ENCODE measurements at regions of chr5 and their contacts with region 1.

Region 1: DNA sequence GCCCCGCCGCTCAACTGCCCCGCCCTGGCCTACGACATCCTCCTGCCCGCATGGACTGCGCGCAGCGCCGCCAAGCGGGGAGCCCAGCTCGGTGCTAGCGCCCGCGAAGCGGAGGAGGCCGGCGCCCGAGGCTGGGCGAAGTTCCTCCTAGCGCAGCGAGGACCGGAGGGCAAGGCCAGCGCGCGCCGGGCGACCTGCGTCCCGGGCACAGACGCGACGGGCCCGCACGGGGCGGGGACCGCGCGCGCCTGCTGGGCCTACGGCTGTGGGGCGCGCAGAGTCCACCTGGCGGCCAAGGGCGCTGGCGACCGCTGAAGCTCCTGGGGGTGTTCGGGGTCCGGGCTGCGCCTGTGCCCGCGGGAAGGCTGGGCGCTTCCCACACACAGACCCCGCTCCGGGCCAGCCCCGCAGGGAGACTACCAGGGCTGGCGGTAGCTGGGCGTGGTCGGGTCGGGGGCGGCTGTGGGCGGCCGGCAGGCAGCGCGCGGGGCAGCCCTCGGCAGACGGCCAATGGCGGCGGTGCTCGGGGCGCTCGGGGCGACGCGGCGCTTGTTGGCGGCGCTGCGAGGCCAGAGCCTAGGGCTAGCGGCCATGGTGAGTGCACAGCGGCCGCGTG is at the start of gene PCBD2:
- DNase-seq: peak; percentile 95
- H3K4me3 ChIP-seq: peak within 1 kb of the TSS; percentile 77 to 86 (median 80)
- H3K27ac ChIP-seq: peak within 1 kb of the TSS; percentile 93 to 100 (median 100)
- H3K4me1 ChIP-seq: peaks cover 0 to 5% (median 2%) of the 10 kb centered on the region in 4 donors
- H3K27me3 ChIP-seq: no peaks in the 10 kb centered on the region
- CTCF ChIP-seq: peak; percentile 85 to 97 (median 90)
- EP300 ChIP-seq: no peak
- POLR2A ChIP-seq: peak; percentile 58
- total RNA-seq, gene PCBD2: 6.4 to 28.9 (median 11.6) TPM

Region 2: DNA sequence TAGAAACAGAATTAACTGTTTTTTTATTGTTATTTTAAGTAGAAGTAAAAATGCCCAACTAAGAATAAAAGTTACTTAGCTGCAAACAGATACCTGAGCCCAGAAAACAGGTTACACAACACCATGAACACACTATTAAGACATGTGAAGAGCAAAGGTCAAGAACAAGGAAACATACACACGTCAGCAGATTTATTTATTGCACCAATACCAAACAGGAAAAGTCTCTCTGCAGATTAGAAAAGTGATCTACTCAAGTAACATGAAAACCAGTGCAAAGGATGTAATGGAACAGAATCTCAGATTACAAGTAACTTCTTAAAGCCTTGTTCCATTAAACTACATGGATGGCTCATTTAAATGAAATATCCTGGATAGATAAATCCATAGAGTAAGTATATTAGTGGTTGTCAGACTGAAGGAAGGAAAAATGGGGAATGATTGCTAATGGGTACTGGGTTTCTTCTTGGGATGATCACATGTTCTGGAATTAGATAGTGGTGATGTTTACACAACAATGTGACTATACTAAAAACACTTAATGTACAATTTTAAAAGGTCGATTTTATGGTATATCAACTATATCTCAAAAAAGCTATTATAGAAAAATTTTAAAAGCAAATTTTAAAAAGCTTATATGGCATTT is 278.2 kb before region 1 on chr5:
- in situ Hi-C with region 1: no loop called
- intact Hi-C with region 1: no loop called
- DNase-seq: no peak
- H3K4me3 ChIP-seq: no peak overlapping the region
- H3K27ac ChIP-seq: peak overlapping the region; percentile 32 to 67 (median 51)
- H3K4me1 ChIP-seq: peaks cover 5 to 36% (median 23%) of the 10 kb centered on the region in 4 donors
- H3K27me3 ChIP-seq: no peaks in the 10 kb centered on the region
- CTCF ChIP-seq: no peak
- EP300 ChIP-seq: no peak
- POLR2A ChIP-seq: no peak

Region 3: GRCh38 chr5:134738133-134738962 is 166.4 kb before region 1 on chr5 and contains the start of gene CAMLG:
- in situ Hi-C with region 1: loop called in 2 of 4 experiments (anchors 10 to 25 kb)
- intact Hi-C with region 1: no loop called
- DNase-seq: peak; percentile 99
- H3K4me3 ChIP-seq: peak within 1 kb of the TSS; percentile 66 to 92 (median 86)
- H3K27ac ChIP-seq: peak within 1 kb of the TSS; percentile 91 to 97 (median 94)
- H3K4me1 ChIP-seq: peaks cover 14 to 25% (median 15%) of the 10 kb centered on the region in 4 donors
- H3K27me3 ChIP-seq: no peaks in the 10 kb centered on the region
- CTCF ChIP-seq: peak; percentile 46 to 91 (median 64)
- EP300 ChIP-seq: no peak
- POLR2A ChIP-seq: peak; percentile 95
- total RNA-seq, gene CAMLG: 12.7 to 31.0 (median 24.2) TPM

Region 4: GRCh38 chr5:134749415-134749814 is 155.3 kb before region 1 on chr5:
- in situ Hi-C with region 1: loop called in 2 of 4 experiments (anchors 10 to 25 kb)
- intact Hi-C with region 1: no loop called
- DNase-seq: no peak
- H3K4me3 ChIP-seq: no peak overlapping the region
- H3K27ac ChIP-seq: no peak overlapping the region
- H3K4me1 ChIP-seq: no peaks in the 10 kb centered on the region
- H3K27me3 ChIP-seq: no peaks in the 10 kb centered on the region
- CTCF ChIP-seq: no peak
- EP300 ChIP-seq: no peak
- POLR2A ChIP-seq: no peak

Region 5: DNA sequence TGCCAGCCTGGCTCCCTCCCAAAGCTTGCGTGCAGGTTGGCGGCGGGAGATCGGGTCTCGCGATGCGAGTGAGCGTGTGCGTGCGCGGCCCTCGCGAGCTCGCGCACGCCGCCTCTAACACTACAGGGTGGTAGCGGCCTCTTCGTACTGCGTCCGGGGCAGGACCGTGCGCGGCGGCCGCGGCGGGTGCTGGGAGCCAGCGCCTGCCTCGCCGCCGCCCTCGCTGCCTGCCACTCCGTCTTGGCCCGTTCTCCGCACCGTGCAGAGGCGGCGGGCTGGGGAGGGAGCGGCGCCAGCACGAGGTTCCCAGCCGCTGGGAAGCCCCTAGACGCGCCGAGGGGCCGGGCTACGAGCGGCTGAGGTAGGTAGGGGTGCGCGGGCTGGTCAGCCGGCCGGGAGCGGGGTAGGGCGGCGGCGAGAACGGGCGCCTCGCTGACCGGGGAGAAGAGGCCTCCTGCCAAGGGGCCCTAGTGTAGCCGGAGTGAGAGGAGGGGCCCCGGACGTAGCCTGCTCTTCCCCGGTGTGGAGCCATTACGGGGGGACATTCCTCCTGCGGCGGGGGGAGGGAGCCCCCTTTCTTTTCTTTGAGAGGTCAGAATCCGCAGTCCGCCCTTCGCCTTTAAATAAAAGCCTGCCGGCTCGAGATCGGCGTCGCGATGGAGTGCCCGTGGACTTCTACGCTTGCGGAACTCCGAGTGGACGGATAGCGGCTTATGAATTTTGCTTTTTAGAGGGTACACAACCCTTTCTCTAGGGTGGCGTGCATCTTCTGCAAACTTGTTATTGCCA is 58.7 kb before region 1 on chr5 and contains the start of gene C5orf24:
- in situ Hi-C with region 1: loop called in 1 of 4 experiments (anchors 10 kb)
- intact Hi-C with region 1: loop called (anchors 5 kb)
- DNase-seq: peak; percentile 96
- H3K4me3 ChIP-seq: peak within 1 kb of the TSS; percentile 74 to 97 (median 82)
- H3K27ac ChIP-seq: peak within 1 kb of the TSS; percentile 97 to 99 (median 98)
- H3K4me1 ChIP-seq: peaks cover 11 to 40% (median 25%) of the 10 kb centered on the region in 4 donors
- H3K27me3 ChIP-seq: no peaks in the 10 kb centered on the region
- CTCF ChIP-seq: no peak
- EP300 ChIP-seq: no peak
- POLR2A ChIP-seq: peak; percentile 93
- total RNA-seq, gene C5orf24: 22.8 to 41.9 (median 34.9) TPM

Region 6: DNA sequence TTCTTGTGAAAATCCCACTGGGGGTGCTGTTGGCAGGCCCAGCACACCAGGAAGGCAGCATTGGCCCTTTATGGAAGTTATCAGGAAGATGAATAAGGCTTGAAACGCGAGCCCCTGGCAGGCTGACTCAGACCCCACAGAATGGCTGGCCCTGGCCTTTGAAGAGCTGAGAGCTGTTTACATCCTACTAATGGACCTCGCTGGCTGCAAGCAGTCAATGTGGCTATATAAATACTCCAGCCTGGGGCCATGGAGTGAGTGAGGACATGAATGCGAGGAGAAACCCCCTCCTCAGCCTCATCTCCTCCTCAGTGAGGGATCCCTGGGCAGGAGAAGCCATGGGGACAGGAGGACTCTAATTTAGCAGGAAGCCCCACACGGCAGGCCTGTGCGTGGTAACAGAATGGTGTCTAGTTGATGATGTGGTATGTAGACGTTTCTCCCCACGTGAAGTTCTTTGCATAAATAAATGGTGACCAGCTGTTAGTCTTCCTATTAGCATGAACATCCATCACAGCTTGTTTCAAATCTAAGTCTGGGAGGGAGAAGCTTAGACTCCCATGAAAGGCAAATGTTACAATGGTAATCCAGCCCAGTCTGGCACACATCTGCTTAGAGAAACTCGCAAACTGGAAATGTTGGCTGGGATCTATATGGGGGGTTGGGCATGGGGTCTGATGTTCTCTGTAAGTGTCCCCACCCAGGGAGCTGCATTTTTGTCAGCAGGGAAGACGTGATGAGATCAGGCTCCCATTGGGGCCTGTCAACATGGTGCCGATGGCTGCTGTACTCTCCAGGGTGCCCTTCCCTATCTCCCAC is 304.4 kb after region 1 on chr5:
- in situ Hi-C with region 1: no loop called
- intact Hi-C with region 1: no loop called
- DNase-seq: peak; percentile 32
- H3K4me3 ChIP-seq: no peak overlapping the region
- H3K27ac ChIP-seq: peak overlapping the region; percentile 10 to 68 (median 64)
- H3K4me1 ChIP-seq: peaks cover 0 to 27% (median 15%) of the 10 kb centered on the region in 4 donors
- H3K27me3 ChIP-seq: no peaks in the 10 kb centered on the region
- CTCF ChIP-seq: no peak
- EP300 ChIP-seq: no peak
- POLR2A ChIP-seq: no peak